Mammary epithelial cell (primary cell): ENCODE measurements at regions of chr9 and their contacts with region 1.

Region 1: GRCh38 chr9:16653491-16654399 is 216.7 kb downstream of the BNC2 start:
- DNase-seq: no peak
- H3K4me3 ChIP-seq: no peak overlapping the region
- H3K27ac ChIP-seq: no peak overlapping the region
- H3K4me1 ChIP-seq: no peaks in the 10 kb centered on the region
- H3K27me3 ChIP-seq: peaks cover 5% of the 10 kb centered on the region
- CTCF ChIP-seq: no peak

Region 2: DNA sequence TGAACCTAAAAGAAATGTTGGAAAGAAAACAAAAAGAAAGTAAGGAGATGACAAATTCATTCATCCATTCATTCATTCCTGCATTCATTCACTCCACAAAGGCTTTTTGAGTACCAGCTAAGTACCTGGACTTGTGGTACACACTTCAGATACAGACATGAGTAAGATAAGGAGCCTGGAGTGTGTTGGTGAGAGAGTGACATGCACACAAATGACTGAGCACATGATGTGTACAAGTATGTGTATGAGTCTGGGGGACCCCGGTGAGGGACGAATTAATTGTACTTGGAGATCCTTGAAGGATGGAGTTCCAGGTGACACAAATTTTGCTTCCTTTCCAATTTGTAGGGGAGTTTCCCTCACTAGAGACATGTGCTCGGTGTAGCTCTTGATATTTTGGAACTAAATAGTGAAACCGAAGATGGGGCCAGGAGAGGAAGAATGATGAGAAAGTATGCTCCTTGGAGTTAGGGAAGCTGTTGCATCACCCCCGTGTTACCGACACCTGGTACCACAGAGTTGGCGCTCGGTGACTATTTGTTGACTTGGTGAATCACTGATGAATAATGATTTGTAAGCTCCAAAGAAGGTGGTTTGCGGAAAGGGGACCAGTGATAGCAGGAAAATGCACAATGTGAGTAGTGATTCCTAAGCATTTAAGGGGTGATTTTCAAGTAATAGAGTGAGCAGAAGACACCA is 591.1 kb before region 1 on chr9:
- CTCF ChIA-PET with region 1: no interaction called
- dilution Hi-C with region 1: no loop called
- in situ Hi-C with region 1: no loop called
- intact Hi-C with region 1: no loop called
- DNase-seq: peak; percentile 99
- H3K4me3 ChIP-seq: no peak overlapping the region
- H3K27ac ChIP-seq: peak overlapping the region; percentile 90
- H3K4me1 ChIP-seq: peaks cover 51% of the 10 kb centered on the region
- H3K27me3 ChIP-seq: no peaks in the 10 kb centered on the region
- CTCF ChIP-seq: no peak

Region 3: DNA sequence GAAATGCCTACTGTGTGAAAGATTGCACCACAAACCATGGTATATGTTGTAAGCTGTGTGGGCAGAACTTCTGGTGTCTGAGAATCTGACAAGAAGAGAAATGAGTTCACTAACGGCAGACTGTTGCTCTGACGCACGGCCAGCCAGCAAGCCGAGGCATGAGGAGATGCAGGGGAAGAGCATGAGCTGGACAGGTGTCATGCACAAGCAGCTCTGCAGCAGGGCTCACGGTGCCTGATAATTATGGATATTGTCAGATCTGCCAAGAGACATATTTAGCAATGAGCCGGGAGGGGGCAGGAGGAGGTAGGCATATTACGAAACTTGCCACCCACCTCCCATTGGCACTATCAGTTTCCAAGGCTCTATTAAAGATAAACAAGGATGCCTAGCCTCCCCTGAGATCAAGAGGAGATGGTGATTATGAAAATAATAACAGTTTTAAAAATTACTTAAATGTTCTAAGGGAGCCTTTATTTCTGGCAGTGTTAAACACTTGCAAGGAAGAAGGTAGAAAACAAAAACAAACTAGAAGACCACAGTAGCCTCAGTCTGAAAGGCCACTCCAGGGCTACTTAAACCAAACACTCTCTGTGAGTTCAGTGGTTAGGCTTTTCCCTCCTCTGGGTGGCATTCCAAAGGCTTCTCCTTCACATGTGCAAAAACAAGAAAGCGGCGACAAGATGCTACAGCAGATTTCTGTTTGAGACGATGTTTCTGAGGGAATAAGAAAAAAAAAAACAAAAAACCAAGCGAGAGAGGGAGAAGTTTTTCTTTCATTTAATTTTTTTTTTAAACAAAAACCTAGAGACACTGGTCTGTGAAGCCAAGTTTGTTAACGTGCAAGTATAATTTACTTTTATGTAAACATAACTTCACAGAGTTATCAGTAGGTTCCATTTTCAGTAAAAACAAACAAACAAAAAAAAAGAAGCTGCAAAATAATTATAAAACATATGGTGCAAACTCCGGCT is 122.8 kb before region 1 on chr9:
- CTCF ChIA-PET with region 1: interaction called, 14 read pairs
- dilution Hi-C with region 1: no loop called
- in situ Hi-C with region 1: no loop called
- intact Hi-C with region 1: no loop called
- DNase-seq: peak; percentile 97
- H3K4me3 ChIP-seq: no peak overlapping the region
- H3K27ac ChIP-seq: peak overlapping the region; percentile 55
- H3K4me1 ChIP-seq: peaks cover 27% of the 10 kb centered on the region
- H3K27me3 ChIP-seq: no peaks in the 10 kb centered on the region
- CTCF ChIP-seq: peak in 1 of 2 donors; percentile 26

Region 4: DNA sequence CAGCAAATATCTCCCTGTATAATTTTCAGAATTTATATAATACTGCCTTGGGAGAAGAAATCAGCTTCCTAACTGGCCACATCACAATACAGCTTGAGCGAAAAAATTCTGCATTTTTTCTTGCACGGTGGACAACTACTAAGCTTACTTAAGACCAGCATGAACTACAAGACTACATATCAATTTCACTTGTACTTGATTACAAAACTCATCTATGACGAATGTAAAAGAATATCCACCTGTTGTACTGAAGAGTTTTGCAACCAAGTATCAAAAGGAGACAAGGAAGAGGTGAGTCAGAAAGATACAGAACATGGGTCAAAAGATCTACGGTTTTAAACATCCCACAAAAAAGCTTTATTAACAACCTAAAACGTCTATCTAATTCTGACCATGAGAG is 62.7 kb before region 1 on chr9:
- CTCF ChIA-PET with region 1: no interaction called
- dilution Hi-C with region 1: loop called (anchors 5 kb)
- in situ Hi-C with region 1: no loop called
- intact Hi-C with region 1: no loop called
- DNase-seq: no peak
- H3K4me3 ChIP-seq: no peak overlapping the region
- H3K27ac ChIP-seq: no peak overlapping the region
- H3K4me1 ChIP-seq: no peaks in the 10 kb centered on the region
- H3K27me3 ChIP-seq: no peaks in the 10 kb centered on the region
- CTCF ChIP-seq: no peak